ENCODE measurements at regions of chr3 and their contacts with region 1.

Region 1: GRCh38 chr3:159796744-159797143 is 191.9 kb upstream of the IL12A start:
- DNase-seq: no peak
- ATAC-seq: no peak

Region 2: DNA sequence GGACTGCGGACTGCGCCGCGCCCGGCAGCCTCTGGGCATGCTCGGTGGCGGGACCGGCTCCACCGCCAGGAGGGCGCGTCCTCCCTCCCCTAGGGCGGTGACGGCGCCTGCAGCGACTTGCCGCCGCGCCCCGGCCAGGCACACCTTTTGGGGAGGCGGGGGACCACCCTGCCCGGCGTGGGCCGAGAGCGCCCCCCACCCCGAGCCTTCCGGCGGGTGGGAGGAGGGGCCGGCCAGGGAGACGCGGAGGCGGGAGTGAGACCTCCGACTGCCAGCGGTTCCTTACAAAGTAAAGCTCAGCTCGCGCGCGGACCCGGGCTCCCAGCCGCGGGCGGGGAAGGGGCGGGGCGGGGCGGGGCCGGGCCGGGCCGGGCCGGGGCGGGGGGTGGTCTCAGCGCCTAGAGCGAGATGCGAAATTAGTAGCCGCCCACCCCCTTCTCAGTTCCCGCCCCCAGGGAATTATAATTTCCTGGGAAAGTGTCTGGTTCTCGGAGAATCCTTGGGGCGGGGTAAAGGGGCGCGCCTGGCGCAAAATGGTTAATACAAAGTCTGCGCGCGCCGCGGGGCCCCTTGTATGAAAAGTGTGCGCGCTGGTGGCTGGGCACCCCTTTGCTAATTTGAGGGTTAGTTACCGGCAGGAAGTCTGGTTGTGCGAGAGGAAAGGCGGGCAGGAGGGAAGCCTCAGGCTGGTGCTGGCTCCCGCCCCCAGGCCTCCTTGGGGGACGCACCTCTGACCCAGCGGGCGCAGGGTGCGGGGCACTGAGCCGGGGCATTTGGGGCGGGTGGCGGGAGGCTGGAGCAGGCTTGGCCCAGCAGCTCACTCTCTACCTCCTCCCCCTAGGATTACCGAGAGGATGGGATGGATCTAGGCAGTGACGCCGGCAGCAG is 32.9 kb before region 1 on chr3:
- intact Hi-C with region 1: loop called (anchors 5 kb)
- DNase-seq: peak; percentile 86
- ATAC-seq: peak; percentile 84

Measured in Right ventricle myocardium superior (tissue), 1 donor.